PC-3 (cell line): ENCODE measurements at regions of chr3 and their contacts with region 1.

Region 1: DNA sequence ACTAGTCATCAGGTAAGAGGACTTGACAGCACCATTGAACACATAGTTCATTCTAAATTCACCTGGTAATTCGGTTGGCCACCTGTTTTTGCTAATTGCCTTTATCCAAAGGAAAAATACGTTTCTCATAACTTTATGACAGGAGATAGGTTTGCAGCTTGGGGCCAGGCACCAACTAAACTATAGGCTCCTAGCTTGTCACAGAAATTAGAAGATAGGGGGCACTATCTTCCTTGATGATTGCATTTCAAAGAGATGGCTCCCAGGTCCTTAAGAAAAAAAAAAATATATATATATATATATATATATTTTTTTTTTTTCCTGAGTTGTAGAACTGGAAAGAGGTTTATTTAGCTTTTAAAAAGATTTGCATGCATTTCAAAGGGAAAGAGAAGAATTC is 563.6 kb downstream of the NAALADL2 start:
- DNase-seq: peak; percentile 46
- ATAC-seq: no peak
- H3K4me3 ChIP-seq: no peak overlapping the region
- H3K27ac ChIP-seq: no peak overlapping the region
- H3K4me1 ChIP-seq: no peaks in the 10 kb centered on the region
- H3K27me3 ChIP-seq: no peaks in the 10 kb centered on the region
- CTCF ChIP-seq: no peak

Region 2: GRCh38 chr3:175932586-175932985 is 509.8 kb after region 1 on chr3:
- CTCF ChIA-PET with region 1: interaction called, 10 read pairs
- POLR2A ChIA-PET with region 1: no interaction called
- intact Hi-C with region 1: no loop called
- DNase-seq: peak; percentile 5
- ATAC-seq: no peak
- H3K4me3 ChIP-seq: no peak overlapping the region
- H3K27ac ChIP-seq: no peak overlapping the region
- H3K4me1 ChIP-seq: no peaks in the 10 kb centered on the region
- H3K27me3 ChIP-seq: no peaks in the 10 kb centered on the region
- CTCF ChIP-seq: no peak